ENCODE measurements at regions of chr17 and their contacts with region 1.

Region 1: DNA sequence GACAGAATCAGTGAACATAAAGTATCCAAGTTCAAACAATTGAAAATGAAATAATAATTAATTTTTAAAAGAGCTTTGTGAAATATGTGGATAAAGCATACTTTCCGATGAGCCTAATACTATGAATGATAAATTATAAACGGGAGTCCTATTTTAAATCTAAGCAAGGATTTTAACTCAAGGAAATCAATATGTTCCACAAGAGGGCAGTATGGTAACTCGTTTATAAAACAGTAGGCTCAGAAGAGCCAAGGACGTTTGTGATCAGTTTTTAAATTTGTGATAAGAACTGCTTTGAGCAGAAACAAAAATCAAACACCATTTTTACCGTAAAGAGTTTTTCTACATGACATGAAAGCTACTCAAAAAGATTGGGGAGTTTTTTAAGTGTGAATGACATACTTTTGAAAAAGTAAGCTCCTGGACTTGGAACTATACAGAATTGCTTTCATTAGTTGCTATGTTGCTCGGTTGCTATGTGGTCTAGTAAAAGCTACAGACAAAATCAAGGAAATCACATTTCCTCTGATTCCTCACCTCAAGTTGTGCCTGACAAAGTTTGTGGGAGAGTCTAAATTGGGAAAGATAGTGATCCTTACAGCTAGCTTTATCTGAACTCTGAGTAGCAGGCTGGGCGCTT is 11.8 kb upstream of the TEKT1 start:
- DNase-seq: no peak
- ATAC-seq: peak; percentile 51
- H3K4me3 Mint-ChIP-seq: no peak overlapping the region
- H3K27ac Mint-ChIP-seq: no peak overlapping the region
- H3K4me1 Mint-ChIP-seq: peaks cover 2% of the 10 kb centered on the region
- H3K27me3 Mint-ChIP-seq: peaks cover 26% of the 10 kb centered on the region

Region 2: DNA sequence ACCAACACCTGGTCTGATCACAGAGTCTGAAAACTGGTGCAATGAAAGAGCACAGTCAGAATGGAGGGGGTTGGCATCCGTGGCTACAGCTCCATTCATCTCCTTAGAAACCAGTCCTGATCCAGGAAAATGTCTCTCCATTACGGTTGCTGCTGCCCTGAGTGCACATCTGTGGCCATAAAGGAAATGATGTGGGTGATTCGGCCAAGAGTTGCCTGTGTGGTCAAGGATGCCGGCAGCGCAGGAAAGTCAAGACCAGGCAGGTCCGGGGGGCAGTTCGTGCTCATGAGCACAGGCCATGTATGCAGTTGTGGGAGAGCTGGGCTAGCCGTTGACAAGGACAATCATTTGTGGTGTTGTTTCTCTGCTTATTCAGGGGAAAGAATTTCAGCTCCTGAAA is 81.6 kb before region 1 on chr17:
- CTCF ChIA-PET with region 1: no interaction called
- POLR2A ChIA-PET with region 1: no interaction called
- intact Hi-C with region 1: no loop called
- DNase-seq: no peak
- ATAC-seq: no peak
- H3K4me3 Mint-ChIP-seq: no peak overlapping the region
- H3K27ac Mint-ChIP-seq: no peak overlapping the region
- H3K4me1 Mint-ChIP-seq: peaks cover 16% of the 10 kb centered on the region
- H3K27me3 Mint-ChIP-seq: no peaks in the 10 kb centered on the region

Region 3: DNA sequence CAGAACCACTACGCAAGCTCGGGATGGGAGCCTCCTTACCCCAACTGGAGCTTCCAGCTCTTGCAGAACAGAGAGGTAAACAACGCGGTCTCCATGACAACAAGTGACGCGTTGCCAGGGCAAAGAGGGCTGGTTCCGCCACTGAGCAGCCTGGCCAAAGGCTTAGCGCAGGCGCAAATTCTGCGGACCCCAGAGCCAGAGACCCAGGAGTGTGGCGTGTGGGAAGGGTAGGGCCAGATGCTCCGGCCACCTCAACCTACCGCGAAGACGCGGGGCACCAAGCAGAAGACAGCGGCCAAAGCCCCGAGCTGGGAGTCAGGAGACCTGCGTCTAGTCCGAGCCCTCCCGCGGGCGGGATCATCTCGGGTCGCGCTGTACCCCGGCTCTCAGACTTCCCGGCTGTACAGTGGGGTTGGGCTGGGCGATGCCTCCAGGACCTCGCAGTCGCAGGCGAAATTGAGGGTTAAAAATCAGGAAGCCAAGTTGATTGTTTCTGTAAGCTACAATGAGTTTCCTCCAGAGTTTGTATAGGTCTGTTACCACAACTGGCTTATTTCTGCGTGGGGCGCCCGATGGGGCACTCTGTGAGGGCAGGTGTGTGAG is 11.6 kb before region 1 on chr17 and contains the start of gene TEKT1:
- CTCF ChIA-PET with region 1: interaction called, 19 read pairs
- POLR2A ChIA-PET with region 1: no interaction called
- intact Hi-C with region 1: no loop called
- DNase-seq: peak; percentile 80
- ATAC-seq: peak; percentile 90
- H3K4me3 Mint-ChIP-seq: peak within 1 kb of the TSS; percentile 46
- H3K27ac Mint-ChIP-seq: no peak within 1 kb of the TSS
- H3K4me1 Mint-ChIP-seq: peaks cover 15% of the 10 kb centered on the region
- H3K27me3 Mint-ChIP-seq: peaks cover 31% of the 10 kb centered on the region
- total RNA-seq, gene TEKT1: not detected

Region 4: DNA sequence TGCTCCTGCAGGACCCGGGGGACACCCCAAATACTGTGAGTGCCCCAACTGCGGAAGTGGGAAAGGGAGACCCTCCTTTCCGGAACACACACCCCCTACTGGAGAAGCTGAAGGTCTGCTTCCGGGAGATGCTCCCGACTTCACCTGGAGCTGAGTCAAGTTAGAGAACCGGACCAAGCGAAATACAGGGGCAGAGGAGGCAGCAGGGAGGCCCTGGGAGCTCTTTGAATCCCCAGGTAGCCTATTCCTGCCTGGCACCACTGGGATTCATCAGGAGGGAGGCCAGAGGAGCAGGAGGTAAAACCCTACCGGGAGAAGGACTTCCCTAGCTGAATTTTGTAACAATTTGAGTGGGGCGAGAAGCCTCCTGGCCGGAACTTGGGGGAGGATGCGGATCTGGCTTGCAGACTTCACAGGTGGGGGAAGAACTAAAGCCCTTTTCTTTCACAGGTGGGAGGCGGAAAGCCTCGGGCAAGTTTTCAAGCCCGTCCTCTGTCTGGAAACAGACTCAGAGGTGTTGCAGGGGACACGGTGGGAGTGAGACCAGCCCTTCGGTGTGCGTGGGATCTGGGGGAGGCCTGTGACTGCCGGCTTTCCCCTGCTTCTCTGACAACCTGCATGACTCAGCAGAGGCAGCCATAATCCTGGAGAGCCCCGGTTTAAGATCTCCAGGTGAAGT is 10.5 kb after region 1 on chr17:
- CTCF ChIA-PET with region 1: interaction called, 27 read pairs
- POLR2A ChIA-PET with region 1: no interaction called
- intact Hi-C with region 1: no loop called
- DNase-seq: peak; percentile 50
- ATAC-seq: peak; percentile 47
- H3K4me3 Mint-ChIP-seq: peak overlapping the region; percentile 68
- H3K27ac Mint-ChIP-seq: peak overlapping the region; percentile 59
- H3K4me1 Mint-ChIP-seq: peaks cover 12% of the 10 kb centered on the region
- H3K27me3 Mint-ChIP-seq: no peaks in the 10 kb centered on the region

Region 5: DNA sequence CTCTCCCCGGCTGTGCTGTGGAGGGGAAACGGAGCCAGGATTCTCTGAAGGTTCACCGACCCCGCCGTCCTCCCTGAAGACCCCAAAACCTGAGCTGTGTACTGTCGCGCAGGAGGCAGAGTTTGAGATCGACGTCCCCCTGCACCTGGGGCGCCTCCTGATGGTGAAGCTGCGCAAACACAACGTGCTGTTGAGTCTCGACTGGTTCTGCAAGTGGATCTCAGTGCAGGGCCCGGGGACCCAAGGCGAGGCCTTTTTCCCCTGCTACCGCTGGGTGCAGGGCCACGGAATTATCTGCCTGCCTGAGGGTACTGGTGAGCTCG is 50.8 kb after region 1 on chr17:
- CTCF ChIA-PET with region 1: interaction called, 35 read pairs
- POLR2A ChIA-PET with region 1: no interaction called
- intact Hi-C with region 1: loop called in 1 of 2 experiments (anchors 1 kb)
- DNase-seq: peak; percentile 65
- ATAC-seq: peak; percentile 55
- H3K4me3 Mint-ChIP-seq: no peak overlapping the region
- H3K27ac Mint-ChIP-seq: no peak overlapping the region
- H3K4me1 Mint-ChIP-seq: no peaks in the 10 kb centered on the region
- H3K27me3 Mint-ChIP-seq: peaks cover 34% of the 10 kb centered on the region

Region 6: GRCh38 chr17:6903326-6903900 is 60.1 kb after region 1 on chr17:
- CTCF ChIA-PET with region 1: interaction called, 12 read pairs
- POLR2A ChIA-PET with region 1: no interaction called
- intact Hi-C with region 1: no loop called
- DNase-seq: no peak
- ATAC-seq: no peak
- H3K4me3 Mint-ChIP-seq: no peak overlapping the region
- H3K27ac Mint-ChIP-seq: no peak overlapping the region
- H3K4me1 Mint-ChIP-seq: no peaks in the 10 kb centered on the region
- H3K27me3 Mint-ChIP-seq: no peaks in the 10 kb centered on the region

Region 7: GRCh38 chr17:7004398-7005253 is 161.3 kb after region 1 on chr17:
- CTCF ChIA-PET with region 1: interaction called, 36 read pairs
- POLR2A ChIA-PET with region 1: no interaction called
- intact Hi-C with region 1: loop called in 1 of 2 experiments (anchors 1 kb)
- DNase-seq: peak; percentile 37
- ATAC-seq: peak; percentile 99
- H3K4me3 Mint-ChIP-seq: no peak overlapping the region
- H3K27ac Mint-ChIP-seq: no peak overlapping the region
- H3K4me1 Mint-ChIP-seq: peaks cover 20% of the 10 kb centered on the region
- H3K27me3 Mint-ChIP-seq: no peaks in the 10 kb centered on the region

Region 8: GRCh38 chr17:7035591-7036368 is 192.4 kb after region 1 on chr17 and contains the start of gene SLC16A13:
- CTCF ChIA-PET with region 1: no interaction called
- POLR2A ChIA-PET with region 1: no interaction called
- intact Hi-C with region 1: no loop called
- DNase-seq: peak; percentile 99
- ATAC-seq: peak; percentile 95
- H3K4me3 Mint-ChIP-seq: peak within 1 kb of the TSS; percentile 86
- H3K27ac Mint-ChIP-seq: peak within 1 kb of the TSS; percentile 96
- H3K4me1 Mint-ChIP-seq: peaks cover 45% of the 10 kb centered on the region
- H3K27me3 Mint-ChIP-seq: no peaks in the 10 kb centered on the region
- total RNA-seq, gene SLC16A13: 8.3 to 9.6 TPM

Region 9: GRCh38 chr17:7336240-7337175 is 493.1 kb after region 1 on chr17 and contains the start of gene ACAP1:
- CTCF ChIA-PET with region 1: no interaction called
- POLR2A ChIA-PET with region 1: no interaction called
- intact Hi-C with region 1: no loop called
- DNase-seq: peak; percentile 93
- ATAC-seq: peak; percentile 95
- H3K4me3 Mint-ChIP-seq: peak within 1 kb of the TSS; percentile 98
- H3K27ac Mint-ChIP-seq: peak within 1 kb of the TSS; percentile 99
- H3K4me1 Mint-ChIP-seq: peaks cover 58% of the 10 kb centered on the region
- H3K27me3 Mint-ChIP-seq: no peaks in the 10 kb centered on the region
- total RNA-seq, gene ACAP1: 343 to 375 TPM

Region 10: GRCh38 chr17:7426896-7427489 is 583.6 kb after region 1 on chr17:
- CTCF ChIA-PET with region 1: no interaction called
- POLR2A ChIA-PET with region 1: no interaction called
- intact Hi-C with region 1: no loop called
- DNase-seq: no peak
- ATAC-seq: no peak
- H3K4me3 Mint-ChIP-seq: no peak overlapping the region
- H3K27ac Mint-ChIP-seq: no peak overlapping the region
- H3K4me1 Mint-ChIP-seq: no peaks in the 10 kb centered on the region
- H3K27me3 Mint-ChIP-seq: no peaks in the 10 kb centered on the region